HCT116 (cell line): ENCODE measurements at regions of chr11 and their contacts with region 1.

Region 1: GRCh38 chr11:102914238-102915043 is 39.7 kb upstream of the MMP12 start:
- DNase-seq: peak; percentile 37
- ATAC-seq: peak; percentile 96
- H3K4me3 ChIP-seq: no peak overlapping the region
- H3K27ac ChIP-seq: no peak overlapping the region
- H3K4me1 ChIP-seq: no peaks in the 10 kb centered on the region
- H3K27me3 ChIP-seq: no peaks in the 10 kb centered on the region
- CTCF ChIP-seq: peak; percentile 66 to 72 (median 70)
- POLR2A ChIP-seq: no peak
- RAD21 ChIP-seq: peak; percentile 71

Region 2: GRCh38 chr11:102794447-102794781 is 120.0 kb before region 1 on chr11:
- CTCF ChIA-PET with region 1: no interaction called
- POLR2A ChIA-PET with region 1: no interaction called
- RAD21 ChIA-PET with region 1: no interaction called
- intact Hi-C with region 1: no loop called
- DNase-seq: peak; percentile 59
- ATAC-seq: peak; percentile 99
- H3K4me3 ChIP-seq: no peak overlapping the region
- H3K27ac ChIP-seq: no peak overlapping the region
- H3K4me1 ChIP-seq: no peaks in the 10 kb centered on the region
- H3K27me3 ChIP-seq: no peaks in the 10 kb centered on the region
- CTCF ChIP-seq: peak; percentile 68 to 85 (median 77)
- POLR2A ChIP-seq: no peak
- RAD21 ChIP-seq: peak; percentile 60

Region 3: DNA sequence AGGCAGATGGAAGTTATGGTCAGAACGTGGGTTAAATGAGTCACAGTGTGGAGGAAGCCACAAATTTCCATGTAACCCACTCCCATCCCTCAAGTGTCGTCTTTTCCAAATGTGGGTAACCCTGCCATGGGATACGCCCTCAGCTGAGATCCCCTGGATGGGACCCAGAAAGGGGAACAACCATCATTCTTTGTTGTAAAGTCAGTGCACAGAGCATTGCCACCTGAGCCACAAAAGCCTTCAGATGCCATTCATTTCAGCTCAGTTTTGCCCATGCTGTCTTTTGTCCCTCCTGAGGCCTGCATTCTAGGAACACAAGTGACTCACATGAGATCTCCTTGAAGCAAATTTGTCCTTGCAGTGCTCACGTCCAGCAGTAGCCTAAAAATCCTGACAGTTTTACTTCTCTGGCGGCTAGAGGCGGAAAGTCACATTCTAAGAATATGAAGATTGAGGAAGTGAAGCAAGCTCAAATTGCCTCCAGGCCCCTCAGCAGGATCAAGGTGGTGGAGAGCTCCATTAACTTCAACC is 10.5 kb after region 1 on chr11:
- CTCF ChIA-PET with region 1: interaction called, 13 read pairs
- POLR2A ChIA-PET with region 1: no interaction called
- RAD21 ChIA-PET with region 1: no interaction called
- intact Hi-C with region 1: no loop called
- DNase-seq: no peak
- ATAC-seq: no peak
- H3K4me3 ChIP-seq: no peak overlapping the region
- H3K27ac ChIP-seq: no peak overlapping the region
- H3K4me1 ChIP-seq: no peaks in the 10 kb centered on the region
- H3K27me3 ChIP-seq: no peaks in the 10 kb centered on the region
- CTCF ChIP-seq: no peak
- POLR2A ChIP-seq: no peak
- RAD21 ChIP-seq: no peak

Region 4: GRCh38 chr11:102929972-102930371 is 15.5 kb after region 1 on chr11:
- CTCF ChIA-PET with region 1: interaction called, 13 read pairs
- POLR2A ChIA-PET with region 1: no interaction called
- RAD21 ChIA-PET with region 1: no interaction called
- intact Hi-C with region 1: no loop called
- DNase-seq: no peak
- ATAC-seq: no peak
- H3K4me3 ChIP-seq: no peak overlapping the region
- H3K27ac ChIP-seq: no peak overlapping the region
- H3K4me1 ChIP-seq: no peaks in the 10 kb centered on the region
- H3K27me3 ChIP-seq: no peaks in the 10 kb centered on the region; the same call in 1 of the 2 replicates
- CTCF ChIP-seq: no peak
- POLR2A ChIP-seq: no peak
- RAD21 ChIP-seq: no peak

Region 5: GRCh38 chr11:102940714-102941588 is 26.5 kb after region 1 on chr11:
- CTCF ChIA-PET with region 1: interaction called, 29 read pairs
- POLR2A ChIA-PET with region 1: no interaction called
- RAD21 ChIA-PET with region 1: no interaction called
- intact Hi-C with region 1: no loop called
- DNase-seq: peak; percentile 70
- ATAC-seq: peak; percentile 94
- H3K4me3 ChIP-seq: no peak overlapping the region
- H3K27ac ChIP-seq: no peak overlapping the region
- H3K4me1 ChIP-seq: peaks cover 0 to 9% of the 10 kb centered on the region in 2 experiments; a peak in 2 of 4 replicates
- H3K27me3 ChIP-seq: no peaks in the 10 kb centered on the region
- CTCF ChIP-seq: peak; percentile 66 to 88 (median 86)
- POLR2A ChIP-seq: no peak
- RAD21 ChIP-seq: peak; percentile 82

Region 6: GRCh38 chr11:102955624-102956023 is 41.2 kb after region 1 on chr11 and contains the start of gene MMP13:
- CTCF ChIA-PET with region 1: no interaction called
- POLR2A ChIA-PET with region 1: no interaction called
- RAD21 ChIA-PET with region 1: no interaction called
- intact Hi-C with region 1: no loop called
- DNase-seq: no peak
- ATAC-seq: no peak
- H3K4me3 ChIP-seq: no peak within 1 kb of the TSS
- H3K27ac ChIP-seq: no peak within 1 kb of the TSS
- H3K4me1 ChIP-seq: 0 out of 4 replicates have a peak, but pooled peaks cover 0 to 3% of the 10 kb centered on the region in 2 experiments
- H3K27me3 ChIP-seq: no peaks in the 10 kb centered on the region
- CTCF ChIP-seq: no peak
- POLR2A ChIP-seq: no peak
- RAD21 ChIP-seq: no peak
- total RNA-seq, gene MMP13: not detected

Region 7: DNA sequence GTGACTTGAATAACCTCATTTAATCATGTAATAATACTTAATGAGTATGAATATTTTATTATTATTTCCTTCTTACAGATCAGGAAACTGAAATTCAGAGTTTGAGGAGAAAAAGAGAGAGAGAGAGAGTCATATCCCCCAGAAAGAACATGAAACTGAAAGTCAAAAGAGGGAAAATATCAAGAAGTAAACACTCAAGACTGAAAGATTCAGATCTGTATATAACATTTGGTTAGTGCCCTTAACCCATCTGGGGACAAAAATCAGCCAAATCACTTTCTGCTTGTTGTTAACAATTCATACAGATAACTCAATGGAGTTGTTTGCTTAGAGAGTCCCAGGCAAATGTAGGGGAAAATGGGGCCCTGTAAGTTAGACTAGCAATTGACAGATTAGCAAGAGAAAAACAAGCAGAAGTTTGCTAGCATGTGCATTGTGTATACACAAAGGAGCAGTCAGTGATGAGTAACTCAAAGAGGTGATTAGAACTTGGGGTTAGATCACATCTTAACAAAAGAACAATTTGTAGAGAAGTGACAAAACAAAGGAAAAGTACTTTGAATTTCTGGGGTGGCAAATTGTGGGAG is 67.0 kb after region 1 on chr11:
- CTCF ChIA-PET with region 1: no interaction called
- POLR2A ChIA-PET with region 1: no interaction called
- RAD21 ChIA-PET with region 1: no interaction called
- intact Hi-C with region 1: no loop called
- DNase-seq: no peak
- ATAC-seq: no peak
- H3K4me3 ChIP-seq: no peak overlapping the region
- H3K27ac ChIP-seq: no peak overlapping the region
- H3K4me1 ChIP-seq: no peaks in the 10 kb centered on the region
- H3K27me3 ChIP-seq: no peaks in the 10 kb centered on the region
- CTCF ChIP-seq: no peak
- POLR2A ChIP-seq: no peak
- RAD21 ChIP-seq: no peak

Region 8: GRCh38 chr11:103055221-103055890 is 140.9 kb after region 1 on chr11:
- CTCF ChIA-PET with region 1: interaction called, 8 read pairs
- POLR2A ChIA-PET with region 1: no interaction called
- RAD21 ChIA-PET with region 1: interaction called in 1 of 2 experiments, 3 read pairs
- intact Hi-C with region 1: loop called (anchors 10 kb)
- DNase-seq: peak; percentile 26
- ATAC-seq: peak; percentile 59
- H3K4me3 ChIP-seq: no peak overlapping the region
- H3K27ac ChIP-seq: no peak overlapping the region
- H3K4me1 ChIP-seq: no peaks in the 10 kb centered on the region
- H3K27me3 ChIP-seq: no peaks in the 10 kb centered on the region
- CTCF ChIP-seq: peak; percentile 45 to 71 (median 55); a peak in 5 of 6 replicates
- POLR2A ChIP-seq: no peak
- RAD21 ChIP-seq: peak; percentile 68

Region 9: DNA sequence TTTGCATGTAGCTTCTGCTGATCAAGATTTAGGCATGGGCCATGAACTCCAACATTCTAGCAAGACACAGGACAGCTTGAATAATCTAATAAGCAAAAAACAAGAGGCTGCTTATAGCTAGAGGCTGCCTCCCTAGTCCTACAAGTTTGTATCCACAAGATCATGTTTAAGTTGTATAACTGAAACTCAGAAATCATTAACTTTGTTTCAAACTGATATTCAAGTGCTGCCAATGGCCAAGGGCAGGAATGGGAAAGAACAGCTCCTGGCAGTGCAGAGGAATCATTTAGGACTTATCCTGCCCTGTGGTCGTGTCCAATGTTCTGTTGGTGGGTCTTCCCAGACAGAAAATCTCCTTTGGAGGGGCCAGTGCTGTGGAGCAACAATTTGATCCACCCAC is 912.4 kb after region 1 on chr11:
- CTCF ChIA-PET with region 1: no interaction called
- POLR2A ChIA-PET with region 1: no interaction called
- RAD21 ChIA-PET with region 1: no interaction called
- intact Hi-C with region 1: no loop called
- DNase-seq: no peak
- ATAC-seq: no peak
- H3K4me3 ChIP-seq: no peak overlapping the region
- H3K27ac ChIP-seq: no peak overlapping the region
- H3K4me1 ChIP-seq: no peaks in the 10 kb centered on the region
- H3K27me3 ChIP-seq: no peaks in the 10 kb centered on the region
- CTCF ChIP-seq: no peak
- POLR2A ChIP-seq: no peak
- RAD21 ChIP-seq: no peak